Ascending aorta (tissue), 2 donors: ENCODE measurements at regions of chr1 and their contacts with region 1.

Region 1: DNA sequence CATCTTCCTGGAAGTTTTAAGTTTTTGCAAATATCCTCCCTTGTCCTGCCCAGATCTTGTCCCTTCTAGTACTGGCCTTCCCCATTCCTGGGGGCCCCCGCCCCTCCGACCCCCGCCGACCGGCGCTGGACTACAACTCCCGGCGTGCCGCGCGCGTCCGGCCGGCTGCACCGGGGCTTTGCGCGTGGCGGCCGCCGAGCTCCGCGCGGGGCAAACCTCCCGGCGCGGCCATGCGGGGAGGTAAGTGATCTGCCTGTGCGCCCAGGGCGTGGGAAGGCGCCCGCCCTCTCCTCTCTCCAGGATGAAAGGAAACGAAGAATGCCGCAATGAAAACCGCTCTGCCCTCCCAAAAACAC is 3.2 kb upstream of the SAMD13 start:
- DNase-seq: peak in 1 of 2 donors; percentile 82
- H3K4me3 ChIP-seq: peak overlapping the region; percentile 79 to 89
- H3K27ac ChIP-seq: peak overlapping the region; percentile 84 to 90
- H3K4me1 ChIP-seq: peaks cover 0 to 15% of the 10 kb centered on the region in 2 donors
- H3K27me3 ChIP-seq: no peaks in the 10 kb centered on the region
- CTCF ChIP-seq: no peak

Region 2: DNA sequence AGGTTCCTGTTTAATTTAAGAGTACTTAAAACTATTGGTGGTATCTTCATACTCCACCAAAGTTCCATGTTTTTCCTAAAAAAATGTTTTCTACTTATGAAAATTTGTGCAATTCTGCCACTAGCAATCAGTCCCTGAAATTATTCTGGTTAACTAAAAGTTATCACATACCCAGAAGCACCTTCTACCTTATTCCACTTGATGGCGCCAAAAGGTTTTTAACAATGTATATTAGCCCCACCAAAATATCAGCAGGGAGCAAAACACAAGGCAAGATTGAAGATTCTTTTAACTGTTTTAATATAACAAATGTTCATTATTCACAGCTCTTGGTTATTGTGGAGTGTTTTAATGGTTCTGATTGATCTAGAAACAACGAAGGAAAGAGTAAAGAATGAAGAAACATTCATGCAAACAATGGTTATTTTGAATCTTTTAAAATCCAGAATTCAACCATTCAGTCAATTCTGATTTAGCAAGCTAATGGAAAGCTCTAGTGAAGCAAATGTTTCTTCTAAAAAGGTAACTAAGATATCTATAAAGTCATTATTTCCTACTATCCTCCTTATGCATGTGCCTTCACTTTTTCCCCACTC is 366.6 kb before region 1 on chr1:
- intact Hi-C with region 1: loop called (anchors 10 kb)
- DNase-seq: no peak
- H3K4me3 ChIP-seq: no peak overlapping the region
- H3K27ac ChIP-seq: no peak overlapping the region
- H3K4me1 ChIP-seq: peaks cover 0 to 7% of the 10 kb centered on the region in 2 donors
- H3K27me3 ChIP-seq: no peaks in the 10 kb centered on the region
- CTCF ChIP-seq: peak; percentile 58 to 79 (median 67)

Region 3: DNA sequence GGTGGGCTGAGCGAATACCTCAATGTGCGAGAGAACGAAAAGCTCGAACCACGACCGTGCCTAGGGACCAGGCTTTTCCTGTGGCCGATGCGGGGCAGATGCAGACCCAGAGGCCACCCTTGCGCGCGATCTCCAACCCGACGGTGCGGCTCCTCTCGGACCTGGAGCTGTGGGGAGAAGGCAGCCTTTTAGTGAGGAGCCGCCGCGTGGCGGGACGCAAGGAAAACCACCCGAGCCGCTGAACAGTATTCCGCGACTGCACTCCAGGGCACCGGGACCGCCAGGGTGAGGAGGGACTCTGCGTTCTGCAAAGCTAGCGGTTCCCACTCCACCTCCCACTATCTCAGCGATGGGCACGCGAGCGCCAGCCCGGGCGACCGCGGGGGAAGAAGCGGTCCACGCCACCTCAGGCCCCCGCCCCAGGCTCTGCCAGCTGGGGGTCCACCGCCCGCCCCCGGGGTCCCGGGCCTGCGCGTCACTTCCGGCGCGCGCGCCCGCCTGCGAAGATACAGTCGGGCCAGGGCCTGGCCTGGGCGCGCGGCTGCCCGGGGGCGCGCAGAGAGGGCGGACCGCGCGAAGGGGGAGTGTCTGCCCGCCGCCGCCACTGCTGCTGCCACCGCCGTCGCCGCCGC is 220.7 kb before region 1 on chr1:
- intact Hi-C with region 1: loop called (anchors 5 kb)
- DNase-seq: peak; percentile 12 to 86
- H3K4me3 ChIP-seq: peak overlapping the region; percentile 90 to 96
- H3K27ac ChIP-seq: peak overlapping the region; percentile 90 to 95
- H3K4me1 ChIP-seq: peaks cover 0 to 6% of the 10 kb centered on the region in 2 donors
- H3K27me3 ChIP-seq: no peaks in the 10 kb centered on the region
- CTCF ChIP-seq: peak in 1 of 3 experiments; percentile 19

Region 4: DNA sequence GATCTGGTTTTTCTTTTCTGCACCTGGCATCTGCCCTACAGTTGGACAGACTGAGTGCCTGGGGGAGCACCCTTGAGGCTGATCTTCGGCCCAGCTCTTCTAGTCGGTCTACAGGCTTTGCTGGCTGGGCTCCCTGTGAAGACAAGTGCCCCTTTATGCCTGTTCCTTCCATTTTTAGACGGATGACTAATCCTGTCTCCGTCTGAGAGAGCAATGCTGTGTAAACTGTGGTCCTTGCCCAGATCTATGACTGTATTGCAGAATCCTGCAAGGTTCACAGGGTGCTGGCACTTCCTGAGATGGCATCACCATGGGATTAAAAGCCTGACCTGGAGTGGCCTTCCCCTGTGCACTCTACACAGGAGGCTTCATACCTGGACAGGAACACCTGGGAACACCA is 44.4 kb before region 1 on chr1:
- intact Hi-C with region 1: loop called (anchors 1 kb)
- DNase-seq: peak; percentile 18 to 79
- H3K4me3 ChIP-seq: no peak overlapping the region
- H3K27ac ChIP-seq: peak overlapping the region; percentile 71 to 72
- H3K4me1 ChIP-seq: peaks cover 4 to 8% of the 10 kb centered on the region in 2 donors
- H3K27me3 ChIP-seq: no peaks in the 10 kb centered on the region
- CTCF ChIP-seq: no peak

Region 5: GRCh38 chr1:84412316-84412942 is 114.1 kb after region 1 on chr1:
- intact Hi-C with region 1: loop called (anchors 10 kb)
- DNase-seq: no peak
- H3K4me3 ChIP-seq: no peak overlapping the region
- H3K27ac ChIP-seq: no peak overlapping the region
- H3K4me1 ChIP-seq: peaks cover 0 to 11% of the 10 kb centered on the region in 2 donors
- H3K27me3 ChIP-seq: no peaks in the 10 kb centered on the region
- CTCF ChIP-seq: no peak

Region 6: GRCh38 chr1:84433258-84434080 is 135.2 kb after region 1 on chr1:
- intact Hi-C with region 1: loop called (anchors 5 kb)
- DNase-seq: peak in 1 of 2 donors; percentile 69
- H3K4me3 ChIP-seq: peak overlapping the region; percentile 29 to 40
- H3K27ac ChIP-seq: no peak overlapping the region
- H3K4me1 ChIP-seq: no peaks in the 10 kb centered on the region
- H3K27me3 ChIP-seq: no peaks in the 10 kb centered on the region
- CTCF ChIP-seq: peak; percentile 42 to 76 (median 65)

Region 7: DNA sequence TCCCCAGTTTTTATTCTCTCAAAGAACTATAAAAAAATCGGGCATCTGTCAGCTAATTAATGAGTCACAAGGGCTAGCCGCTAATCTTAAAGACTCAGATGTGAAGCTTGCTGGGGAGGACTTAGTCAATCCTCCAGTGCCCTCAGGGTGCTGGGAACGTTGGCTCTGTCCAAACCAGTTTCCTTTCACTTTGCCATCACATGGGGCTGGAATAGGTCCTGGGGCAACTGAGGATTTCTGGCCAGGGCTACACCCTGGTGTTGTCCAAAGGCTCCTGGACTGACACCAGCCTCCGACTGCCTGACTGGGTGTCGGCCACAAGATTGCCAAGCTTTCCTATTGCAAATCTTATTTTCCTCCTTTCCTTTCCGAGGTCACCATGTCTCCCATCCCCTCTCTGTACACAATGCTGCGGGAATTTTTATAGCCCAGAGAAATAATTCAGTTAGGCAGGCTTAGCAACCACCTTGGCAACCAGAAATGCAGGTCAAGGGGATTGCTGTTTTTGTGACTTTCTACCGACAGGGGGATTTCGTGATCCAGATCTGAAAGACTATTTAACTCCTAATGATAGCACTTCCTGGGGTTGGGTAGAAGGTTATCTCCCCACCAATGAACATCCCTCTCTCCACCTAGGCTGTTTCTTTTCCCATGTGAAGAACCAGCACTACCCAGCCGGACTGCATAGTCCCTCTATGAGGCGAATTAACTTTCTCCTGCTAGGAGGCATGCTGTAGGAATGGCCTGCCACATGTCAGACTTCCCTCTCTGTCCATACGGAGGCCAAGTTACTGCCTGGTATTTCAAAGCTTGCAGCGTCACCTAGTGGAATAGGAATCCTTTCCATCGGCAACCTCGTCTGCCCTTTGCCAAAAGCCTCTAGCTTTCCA is 305.9 kb after region 1 on chr1:
- intact Hi-C with region 1: loop called (anchors 10 kb)
- DNase-seq: peak; percentile 52 to 83
- H3K4me3 ChIP-seq: peak overlapping the region; percentile 49 to 55
- H3K27ac ChIP-seq: peak overlapping the region; percentile 87 to 94
- H3K4me1 ChIP-seq: peaks cover 3 to 11% of the 10 kb centered on the region in 2 donors
- H3K27me3 ChIP-seq: no peaks in the 10 kb centered on the region
- CTCF ChIP-seq: peak; percentile 68 to 81 (median 77)

Region 8: DNA sequence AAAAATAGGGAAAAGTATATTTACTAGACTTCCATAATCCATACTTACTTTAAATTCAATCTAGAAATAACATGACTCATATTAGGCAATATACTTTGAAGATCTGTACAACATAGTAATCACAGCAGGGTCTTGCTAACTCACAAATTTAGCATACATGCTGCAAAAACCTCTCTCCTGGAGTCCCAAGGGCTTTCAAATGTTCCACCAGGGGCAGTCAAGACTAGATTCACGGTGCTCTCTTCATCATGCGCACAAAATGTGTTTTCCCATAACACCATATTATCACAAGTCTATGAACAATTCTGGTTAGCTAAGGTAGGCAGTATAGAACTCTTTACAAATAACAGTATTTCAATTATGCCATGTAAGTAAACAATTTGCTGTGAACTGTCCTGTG is 346.2 kb after region 1 on chr1:
- intact Hi-C with region 1: no loop called
- DNase-seq: no peak
- H3K4me3 ChIP-seq: no peak overlapping the region
- H3K27ac ChIP-seq: no peak overlapping the region
- H3K4me1 ChIP-seq: no peaks in the 10 kb centered on the region
- H3K27me3 ChIP-seq: no peaks in the 10 kb centered on the region
- CTCF ChIP-seq: no peak